Activated CD4-positive, alpha-beta memory T cell treated with anti-CD3 and anti-CD28 coated beads, Interleukin-2, amount 10 ng/mL, durations not matched to agents 7 days and 5 days (primary cell): ENCODE measurements at regions of chr2 and their contacts with region 1.

Region 1: GRCh38 chr2:64730551-64731262 is 77.0 kb upstream of the SERTAD2 start:
- DNase-seq: peak; percentile 45
- H3K4me3 Mint-ChIP-seq: peak overlapping the region; percentile 74
- H3K27ac Mint-ChIP-seq: peak overlapping the region; percentile 84
- H3K4me1 Mint-ChIP-seq: peaks cover 52% of the 10 kb centered on the region
- H3K27me3 Mint-ChIP-seq: peaks cover 2% of the 10 kb centered on the region

Region 2: DNA sequence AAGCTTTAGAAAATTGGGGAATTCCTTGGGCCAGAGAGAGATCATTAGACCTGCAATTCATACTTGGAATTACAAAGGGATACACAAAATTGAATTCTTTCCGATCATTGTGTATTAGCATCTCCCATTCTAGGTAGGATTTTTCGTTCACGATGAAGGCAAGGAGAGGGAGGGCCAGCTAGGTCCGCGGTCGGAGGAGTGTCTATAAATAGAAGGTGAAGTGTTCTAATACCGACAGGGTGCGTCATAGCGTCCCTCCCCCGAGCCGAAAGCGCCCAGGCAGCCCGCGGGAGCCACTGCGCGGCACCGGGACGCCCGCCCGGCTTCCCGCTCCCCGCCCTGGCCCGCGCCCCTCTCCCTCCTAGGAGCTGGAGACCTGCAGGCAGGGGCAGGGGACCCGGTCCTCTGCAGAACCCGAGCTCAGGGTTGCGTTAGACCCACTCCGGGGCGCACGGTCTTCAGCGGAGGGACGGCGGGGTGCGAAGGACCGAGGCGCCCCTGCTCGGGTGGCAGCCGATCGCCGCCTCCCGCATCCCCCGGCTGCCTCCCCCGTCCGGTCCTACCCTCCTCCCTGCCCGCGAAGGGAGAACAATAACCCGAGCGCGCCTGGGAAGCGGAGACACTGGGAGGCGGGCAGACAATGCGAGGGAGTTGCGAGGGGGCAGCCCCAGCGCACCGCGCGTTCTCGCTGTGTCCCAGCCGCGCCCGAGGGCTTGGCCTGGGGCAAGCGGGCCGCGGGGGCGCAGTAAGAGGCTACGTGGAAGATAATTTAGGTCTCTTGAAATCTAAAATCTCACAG is 37.2 kb after region 1 on chr2:
- CTCF ChIA-PET with region 1: interaction called, 3 read pairs
- POLR2A ChIA-PET with region 1: interaction called, 12 read pairs
- DNase-seq: peak; percentile 84
- H3K4me3 Mint-ChIP-seq: peak overlapping the region; percentile 80
- H3K27ac Mint-ChIP-seq: peak overlapping the region; percentile 79
- H3K4me1 Mint-ChIP-seq: peaks cover 23% of the 10 kb centered on the region
- H3K27me3 Mint-ChIP-seq: peaks cover 15% of the 10 kb centered on the region